Activated CD4-positive, alpha-beta T cell treated with anti-CD3 and anti-CD28 coated beads for 36 hours (primary cell): ENCODE measurements at regions of chr12 and their contacts with region 1.

Region 1: DNA sequence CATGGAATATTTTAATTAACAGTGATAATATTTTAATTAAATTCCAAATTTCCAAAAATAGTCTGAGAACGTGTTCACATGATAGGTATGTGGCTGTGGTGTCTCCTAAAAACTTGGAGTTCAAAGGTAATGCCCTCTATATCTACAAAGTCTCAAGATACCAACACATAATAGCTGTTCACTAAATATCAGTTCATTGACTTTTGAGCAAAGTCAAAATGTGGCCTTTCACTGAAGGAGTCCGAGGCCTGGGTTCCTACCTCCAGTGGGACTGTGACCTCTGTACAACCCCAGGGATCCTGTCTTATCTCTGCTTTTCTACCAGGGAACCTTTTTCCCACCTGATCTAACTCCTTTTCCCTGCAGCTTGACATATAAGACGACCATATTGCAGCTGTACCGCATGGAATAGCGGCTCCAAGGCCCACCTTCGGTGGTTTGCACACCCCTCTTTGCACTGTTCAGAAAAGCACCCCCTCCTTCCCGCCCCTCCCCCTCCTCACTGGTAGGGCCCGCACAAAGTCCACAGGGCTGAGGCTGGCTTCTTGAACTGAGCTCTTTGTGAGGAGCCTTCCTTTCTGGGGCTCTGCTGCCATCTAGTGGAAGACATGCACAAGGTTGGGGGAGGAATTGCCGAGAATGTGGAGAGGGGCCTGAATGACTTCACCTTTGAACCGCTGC is 3.1 kb downstream of the CCND2 start:
- DNase-seq: peak; percentile 93
- ATAC-seq: peak; percentile 39
- H3K4me3 Mint-ChIP-seq: peak overlapping the region; percentile 95
- H3K27ac Mint-ChIP-seq: peak overlapping the region; percentile 99
- H3K4me1 Mint-ChIP-seq: peaks cover 62% of the 10 kb centered on the region
- H3K27me3 Mint-ChIP-seq: no peaks in the 10 kb centered on the region

Region 2: DNA sequence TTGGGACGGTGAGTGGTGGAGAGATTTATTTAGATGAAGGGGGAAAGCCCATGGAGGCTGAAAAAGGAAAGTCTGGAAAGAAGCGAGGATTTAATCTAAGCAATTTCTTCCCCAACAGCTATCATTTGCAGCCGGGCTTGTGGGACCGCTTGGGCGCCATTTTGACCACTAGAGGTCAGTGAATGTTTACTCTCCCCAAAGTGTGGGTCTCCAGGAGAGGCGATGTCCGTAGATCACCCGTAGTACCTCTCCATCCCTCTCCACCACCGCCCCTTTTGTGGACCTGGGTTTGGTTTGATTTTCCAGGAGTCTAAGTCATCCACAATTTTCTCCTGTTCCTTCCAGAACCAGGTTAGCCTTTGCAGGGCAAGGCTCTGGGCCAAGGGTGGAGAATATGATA is 312.2 kb before region 1 on chr12:
- CTCF ChIA-PET with region 1: interaction called, 22 read pairs
- POLR2A ChIA-PET with region 1: no interaction called
- intact Hi-C with region 1: no loop called
- DNase-seq: peak; percentile 47
- ATAC-seq: no peak
- H3K4me3 Mint-ChIP-seq: no peak overlapping the region
- H3K27ac Mint-ChIP-seq: no peak overlapping the region
- H3K4me1 Mint-ChIP-seq: peaks cover 18% of the 10 kb centered on the region
- H3K27me3 Mint-ChIP-seq: no peaks in the 10 kb centered on the region

Region 3: DNA sequence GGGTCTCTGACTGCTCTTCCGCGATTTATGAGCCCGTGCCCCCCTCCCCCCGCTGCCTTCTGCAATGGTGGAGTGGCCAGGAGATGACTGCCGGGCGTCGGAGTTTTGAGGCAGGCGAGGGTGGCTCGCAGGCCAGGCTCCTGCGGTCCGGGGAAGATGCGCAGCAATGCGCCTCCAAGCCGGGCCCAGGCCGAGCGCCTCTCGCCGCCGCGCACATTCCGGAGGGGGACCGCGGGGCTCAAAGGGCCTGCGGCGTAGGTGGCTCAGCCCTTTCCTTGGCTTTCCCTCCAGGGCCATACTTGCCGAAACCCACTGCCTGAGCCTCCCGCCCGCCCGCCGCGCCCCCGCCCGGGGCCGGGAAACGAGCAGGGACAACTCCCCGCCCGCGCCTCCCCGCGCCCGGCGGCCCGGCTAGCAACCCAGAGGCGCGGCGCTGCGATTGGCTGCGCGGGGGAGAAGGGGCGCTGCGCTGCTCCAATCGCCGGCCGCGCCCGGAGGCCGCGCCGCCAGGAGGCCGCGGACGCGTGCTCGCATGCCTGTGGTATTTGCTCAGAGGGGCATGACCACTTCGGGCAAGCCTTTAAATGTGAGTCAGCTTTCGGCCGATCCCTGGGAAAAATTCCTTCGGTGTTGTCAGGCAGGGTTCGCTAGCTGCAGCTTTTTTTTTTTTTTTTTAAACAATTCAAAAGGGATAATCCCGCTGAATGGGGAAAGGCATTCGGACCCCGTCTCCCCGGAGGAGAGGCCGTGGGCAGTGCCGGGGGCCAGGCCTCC is 245.5 kb before region 1 on chr12:
- CTCF ChIA-PET with region 1: interaction called, 5 read pairs
- POLR2A ChIA-PET with region 1: no interaction called
- intact Hi-C with region 1: loop called in 1 of 2 experiments (anchors 2 kb)
- DNase-seq: peak; percentile 84
- ATAC-seq: peak; percentile 94
- H3K4me3 Mint-ChIP-seq: peak overlapping the region; percentile 55
- H3K27ac Mint-ChIP-seq: peak overlapping the region; percentile 77
- H3K4me1 Mint-ChIP-seq: peaks cover 33% of the 10 kb centered on the region
- H3K27me3 Mint-ChIP-seq: no peaks in the 10 kb centered on the region

Region 4: DNA sequence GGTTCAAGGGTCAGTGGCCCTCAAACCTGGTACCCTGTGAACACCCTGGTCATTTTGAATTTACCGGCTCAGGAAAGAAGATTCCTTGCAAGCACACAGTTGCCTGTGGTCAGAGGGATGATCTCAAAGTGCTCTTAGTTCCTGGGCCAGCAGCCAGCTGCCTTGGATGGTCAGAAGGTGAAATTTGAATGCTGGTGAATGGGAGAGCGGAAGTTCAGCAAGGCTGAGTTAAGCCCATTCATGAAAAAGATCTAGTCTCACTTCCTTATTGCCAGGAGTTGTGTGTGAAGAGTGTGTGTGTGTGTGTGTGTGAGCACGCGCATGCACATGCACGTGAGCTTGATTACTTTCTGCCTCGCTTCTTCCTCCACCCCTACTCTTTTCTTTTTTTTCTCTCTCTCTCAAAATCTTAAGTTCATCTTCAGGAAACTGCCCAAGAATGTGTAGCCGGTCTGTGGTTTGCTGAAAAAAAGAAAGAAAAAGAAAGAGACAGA is 158.6 kb before region 1 on chr12:
- CTCF ChIA-PET with region 1: interaction called, 13 read pairs
- POLR2A ChIA-PET with region 1: interaction called, 3 read pairs
- intact Hi-C with region 1: loop called in 1 of 2 experiments (anchors 2 kb)
- DNase-seq: no peak
- ATAC-seq: no peak
- H3K4me3 Mint-ChIP-seq: peak overlapping the region; percentile 38
- H3K27ac Mint-ChIP-seq: peak overlapping the region; percentile 86
- H3K4me1 Mint-ChIP-seq: peaks cover 63% of the 10 kb centered on the region
- H3K27me3 Mint-ChIP-seq: peaks cover 3% of the 10 kb centered on the region

Region 5: GRCh38 chr12:4178424-4179170 is 98.1 kb before region 1 on chr12:
- CTCF ChIA-PET with region 1: interaction called, 6 read pairs
- POLR2A ChIA-PET with region 1: interaction called, 3 read pairs
- intact Hi-C with region 1: loop called in 1 of 2 experiments (anchors 1 kb)
- DNase-seq: peak; percentile 52
- ATAC-seq: peak; percentile 98
- H3K4me3 Mint-ChIP-seq: peak overlapping the region; percentile 4
- H3K27ac Mint-ChIP-seq: peak overlapping the region; percentile 66
- H3K4me1 Mint-ChIP-seq: peaks cover 21% of the 10 kb centered on the region
- H3K27me3 Mint-ChIP-seq: no peaks in the 10 kb centered on the region

Region 6: GRCh38 chr12:4293299-4293965 is 16.8 kb after region 1 on chr12:
- CTCF ChIA-PET with region 1: interaction called, 15 read pairs
- POLR2A ChIA-PET with region 1: interaction called, 5 read pairs
- intact Hi-C with region 1: no loop called
- DNase-seq: peak; percentile 73
- ATAC-seq: peak; percentile 82
- H3K4me3 Mint-ChIP-seq: peak overlapping the region; percentile 48
- H3K27ac Mint-ChIP-seq: peak overlapping the region; percentile 92
- H3K4me1 Mint-ChIP-seq: peaks cover 78% of the 10 kb centered on the region
- H3K27me3 Mint-ChIP-seq: no peaks in the 10 kb centered on the region

Region 7: DNA sequence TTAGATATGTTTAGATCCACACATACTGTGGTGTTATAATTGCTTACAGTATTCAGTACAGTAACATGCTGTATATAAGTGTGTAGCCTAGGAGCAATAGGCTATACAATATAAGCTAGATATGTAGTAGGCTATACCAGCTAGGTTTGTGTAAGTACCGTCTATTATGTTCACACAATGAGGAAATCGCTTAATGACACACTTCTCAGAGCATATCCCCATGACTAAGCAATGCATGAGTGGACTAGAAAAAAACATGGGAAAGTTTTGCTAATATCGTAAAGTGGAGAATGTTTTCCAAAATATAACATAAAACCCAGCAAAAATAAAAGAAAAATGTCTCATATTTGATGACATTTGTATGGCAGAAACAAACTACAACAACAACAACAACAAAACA is 344.8 kb after region 1 on chr12:
- CTCF ChIA-PET with region 1: no interaction called
- POLR2A ChIA-PET with region 1: no interaction called
- intact Hi-C with region 1: no loop called
- DNase-seq: no peak
- ATAC-seq: no peak
- H3K4me3 Mint-ChIP-seq: no peak overlapping the region
- H3K27ac Mint-ChIP-seq: no peak overlapping the region
- H3K4me1 Mint-ChIP-seq: no peaks in the 10 kb centered on the region
- H3K27me3 Mint-ChIP-seq: peaks cover 11% of the 10 kb centered on the region

Region 8: DNA sequence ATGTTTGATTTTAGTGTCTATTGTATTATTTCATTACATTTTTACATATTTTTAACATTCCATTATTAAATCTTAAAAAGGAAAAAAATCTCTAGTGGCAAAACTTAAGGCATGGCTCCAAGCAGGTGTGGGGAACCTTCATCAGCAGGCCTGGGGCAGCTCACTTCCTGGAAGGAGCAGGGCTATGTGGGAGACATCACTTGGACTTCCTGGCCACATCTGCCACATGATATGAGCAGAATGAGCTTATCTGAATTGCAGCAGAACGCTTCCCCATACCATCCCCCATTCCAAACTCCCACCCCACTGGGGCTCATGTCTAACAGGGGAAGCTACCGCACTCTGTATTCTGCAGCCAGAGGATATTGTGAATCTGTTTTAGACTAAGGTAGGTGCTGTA is 598.0 kb after region 1 on chr12:
- CTCF ChIA-PET with region 1: no interaction called
- POLR2A ChIA-PET with region 1: no interaction called
- intact Hi-C with region 1: no loop called
- DNase-seq: no peak
- ATAC-seq: no peak
- H3K4me3 Mint-ChIP-seq: no peak overlapping the region
- H3K27ac Mint-ChIP-seq: no peak overlapping the region
- H3K4me1 Mint-ChIP-seq: no peaks in the 10 kb centered on the region
- H3K27me3 Mint-ChIP-seq: peaks cover 15% of the 10 kb centered on the region